PC-3 (cell line): ENCODE measurements at regions of chr12 and their contacts with region 1.

Region 1: DNA sequence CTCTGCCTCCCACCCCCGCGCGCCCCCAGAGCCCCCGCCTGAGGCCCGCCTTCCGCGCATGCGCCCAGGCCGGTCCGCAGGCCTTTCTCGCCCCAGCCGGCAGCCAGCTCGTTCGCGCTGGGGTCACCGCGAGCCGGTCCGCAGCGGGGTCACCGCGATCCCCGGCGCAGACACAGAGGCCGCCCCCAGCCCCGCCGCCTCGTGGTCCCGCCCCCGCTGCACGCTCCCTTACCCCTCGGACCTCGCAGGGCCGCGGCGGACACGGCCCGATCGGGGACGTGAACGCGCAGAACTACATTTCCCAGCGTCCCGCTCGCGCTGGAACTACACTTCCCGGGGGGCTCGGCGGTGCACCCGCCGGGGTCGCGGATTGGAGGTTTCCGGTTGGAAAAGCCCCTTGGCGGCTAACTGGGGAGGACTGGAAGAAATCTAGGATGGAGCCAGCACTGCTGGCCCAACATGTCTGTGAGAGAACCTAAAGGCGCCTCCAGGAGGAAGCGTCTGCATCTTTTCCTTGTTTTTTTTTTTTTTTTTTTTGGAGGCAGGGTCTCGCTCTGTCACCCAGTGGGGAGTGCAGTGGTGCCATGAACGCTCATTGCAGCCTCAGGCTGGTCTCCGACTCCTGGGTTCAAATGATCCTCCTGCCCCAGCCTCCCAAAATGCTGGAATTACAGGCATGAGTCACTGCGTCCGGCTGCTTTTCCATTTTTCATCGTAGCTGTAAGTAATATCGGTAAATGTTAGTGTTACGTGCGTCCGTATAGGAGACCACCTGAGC is at the start of gene ZNF605:
- DNase-seq: peak; percentile 87
- ATAC-seq: peak; percentile 84
- H3K4me3 ChIP-seq: peak within 1 kb of the TSS; percentile 84
- H3K27ac ChIP-seq: peak within 1 kb of the TSS; percentile 68
- H3K4me1 ChIP-seq: peaks cover 8% of the 10 kb centered on the region
- H3K27me3 ChIP-seq: no peaks in the 10 kb centered on the region
- CTCF ChIP-seq: no peak
- total RNA-seq, gene ZNF605: 5.9 and 8.6 TPM in 2 replicates

Region 2: GRCh38 chr12:132771126-132771838 is 184.9 kb before region 1 on chr12:
- CTCF ChIA-PET with region 1: no interaction called
- POLR2A ChIA-PET with region 1: no interaction called
- intact Hi-C with region 1: no loop called
- DNase-seq: no peak
- ATAC-seq: no peak
- H3K4me3 ChIP-seq: no peak overlapping the region
- H3K27ac ChIP-seq: no peak overlapping the region
- H3K4me1 ChIP-seq: peaks cover 9% of the 10 kb centered on the region
- H3K27me3 ChIP-seq: no peaks in the 10 kb centered on the region
- CTCF ChIP-seq: no peak

Region 3: GRCh38 chr12:132908145-132909044 is 47.8 kb before region 1 on chr12:
- CTCF ChIA-PET with region 1: no interaction called
- POLR2A ChIA-PET with region 1: no interaction called
- intact Hi-C with region 1: loop called (anchors 2 kb)
- DNase-seq: peak; percentile 100
- ATAC-seq: peak; percentile 97
- H3K4me3 ChIP-seq: peak overlapping the region; percentile 76
- H3K27ac ChIP-seq: peak overlapping the region; percentile 52
- H3K4me1 ChIP-seq: peaks cover 3% of the 10 kb centered on the region; the same call in 1 of the 2 replicates
- H3K27me3 ChIP-seq: no peaks in the 10 kb centered on the region
- CTCF ChIP-seq: no peak

Region 4: GRCh38 chr12:132972374-132972773 is 16.2 kb after region 1 on chr12:
- CTCF ChIA-PET with region 1: no interaction called
- POLR2A ChIA-PET with region 1: interaction called, 21 read pairs
- intact Hi-C with region 1: no loop called
- DNase-seq: no peak
- ATAC-seq: no peak
- H3K4me3 ChIP-seq: no peak overlapping the region
- H3K27ac ChIP-seq: no peak overlapping the region
- H3K4me1 ChIP-seq: no peaks in the 10 kb centered on the region
- H3K27me3 ChIP-seq: no peaks in the 10 kb centered on the region
- CTCF ChIP-seq: no peak

Region 5: DNA sequence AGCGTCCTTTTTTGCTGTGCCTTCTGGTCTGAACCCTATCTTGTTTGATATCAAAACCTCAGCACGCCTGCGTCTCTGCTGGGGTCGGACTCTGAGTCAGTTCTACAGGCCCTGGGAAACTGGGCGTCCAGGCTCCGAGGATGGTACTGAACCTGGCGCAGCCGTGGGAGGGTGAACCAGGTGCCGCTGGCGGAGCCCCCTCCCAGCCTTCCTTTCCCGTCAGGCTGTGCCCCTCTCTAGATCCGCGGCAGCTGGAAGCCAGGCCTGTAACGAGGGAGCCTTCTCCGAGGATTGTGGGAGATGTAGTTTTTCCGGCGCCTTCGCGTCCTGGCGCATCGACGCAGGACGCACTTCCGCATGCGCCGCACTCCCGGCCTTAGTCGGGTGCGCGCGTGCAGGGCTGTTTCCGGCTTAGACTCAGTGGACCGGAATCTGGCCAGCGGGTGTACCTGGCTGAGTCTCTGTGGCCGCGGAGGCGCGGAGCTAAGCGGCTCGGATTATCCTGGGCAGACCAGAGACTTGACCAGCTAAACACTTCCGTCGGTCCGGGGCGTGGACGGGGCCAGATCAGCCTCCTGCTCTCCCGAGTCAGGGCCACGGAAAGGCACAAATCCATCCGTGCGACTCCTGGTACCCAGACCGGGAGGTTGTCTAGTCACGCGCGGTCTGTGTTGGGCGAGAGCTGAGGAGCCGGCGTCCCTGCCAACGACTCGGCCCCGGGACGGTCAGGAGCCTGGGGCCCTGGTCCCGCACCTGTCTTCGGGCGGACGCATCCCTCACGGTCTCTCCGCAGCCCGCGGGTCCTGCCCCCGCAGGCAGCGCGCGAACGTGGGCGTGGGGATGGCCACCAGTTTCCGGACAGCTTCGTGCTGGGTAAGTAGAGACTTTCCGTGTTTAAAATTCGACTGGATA is 30.1 kb after region 1 on chr12 and contains the start of gene ZNF26:
- CTCF ChIA-PET with region 1: no interaction called
- POLR2A ChIA-PET with region 1: interaction called, 21 read pairs
- intact Hi-C with region 1: loop called (anchors 1 kb)
- DNase-seq: peak; percentile 97
- ATAC-seq: peak; percentile 96
- H3K4me3 ChIP-seq: peak within 1 kb of the TSS; percentile 76
- H3K27ac ChIP-seq: no peak within 1 kb of the TSS
- H3K4me1 ChIP-seq: peaks cover 13% of the 10 kb centered on the region; the same call in 1 of the 2 replicates
- H3K27me3 ChIP-seq: no peaks in the 10 kb centered on the region; the same call in 1 of the 2 replicates
- CTCF ChIP-seq: no peak
- total RNA-seq, gene ZNF26: 30.2 and 39.2 TPM in 2 replicates